T-cell (primary cell): ENCODE measurements at regions of chr10 and their contacts with region 1.

Region 1: DNA sequence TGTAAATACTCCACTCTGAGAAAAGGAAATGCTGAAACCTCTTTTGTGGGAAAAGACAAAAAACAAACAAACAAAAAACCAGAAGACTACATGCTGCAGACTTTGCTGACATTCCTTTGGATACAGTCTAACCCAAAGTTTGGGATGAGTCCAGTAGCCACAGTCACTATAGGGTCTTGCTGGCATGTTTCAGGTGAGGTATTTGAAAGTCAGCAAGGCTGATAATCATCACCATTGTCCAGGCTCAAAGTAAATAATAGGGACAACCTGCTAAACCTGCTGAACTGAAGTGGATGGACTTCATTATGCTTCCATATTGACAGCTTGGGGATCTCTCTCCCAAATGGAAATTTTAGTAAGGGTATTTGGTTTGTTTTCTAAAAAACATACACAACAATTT is 1087.0 kb upstream of the LRRTM3 start:
- DNase-seq: no peak
- ATAC-seq: no peak
- H3K4me3 ChIP-seq: no peak overlapping the region
- H3K4me3 Mint-ChIP-seq: no peak overlapping the region
- H3K27ac ChIP-seq: no peak overlapping the region
- H3K27ac Mint-ChIP-seq: no peak overlapping the region
- H3K4me1 ChIP-seq: no peaks in the 10 kb centered on the region
- H3K4me1 Mint-ChIP-seq: no peaks in the 10 kb centered on the region
- H3K27me3 ChIP-seq: no peaks in the 10 kb centered on the region
- H3K27me3 Mint-ChIP-seq: no peaks in the 10 kb centered on the region

Region 2: DNA sequence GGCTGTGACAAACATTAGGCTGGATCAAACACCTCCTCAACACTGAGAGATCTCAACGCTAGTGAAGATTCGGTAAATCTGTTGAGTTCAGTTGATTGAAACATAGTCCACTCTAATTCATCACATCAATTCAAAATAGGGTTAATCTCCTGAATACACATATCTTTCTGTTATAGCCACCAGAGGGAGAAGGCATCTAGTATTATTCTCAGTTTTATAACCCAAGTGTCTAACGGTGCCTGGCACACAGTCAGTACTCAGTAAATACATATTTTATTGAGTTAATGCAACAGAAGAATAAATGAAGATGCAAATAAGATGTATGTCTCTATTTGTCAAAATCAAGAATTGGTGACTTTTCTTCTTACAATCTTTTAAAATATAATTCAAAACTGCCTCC is 273.2 kb after region 1 on chr10:
- CTCF ChIA-PET with region 1: no interaction called
- POLR2A ChIA-PET with region 1: interaction called in 1 of 2 experiments, 10 read pairs
- DNase-seq: no peak
- ATAC-seq: no peak
- H3K4me3 ChIP-seq: no peak overlapping the region
- H3K4me3 Mint-ChIP-seq: no peak overlapping the region
- H3K27ac ChIP-seq: no peak overlapping the region
- H3K27ac Mint-ChIP-seq: no peak overlapping the region
- H3K4me1 ChIP-seq: no peaks in the 10 kb centered on the region
- H3K4me1 Mint-ChIP-seq: no peaks in the 10 kb centered on the region
- H3K27me3 ChIP-seq: no peaks in the 10 kb centered on the region
- H3K27me3 Mint-ChIP-seq: no peaks in the 10 kb centered on the region